ENCODE measurements at regions of chr5 and their contacts with region 1.

Region 1: GRCh38 chr5:5340206-5340729 is 82.2 kb upstream of the ICE1 start:
- DNase-seq: peak; percentile 97
- H3K4me3 Mint-ChIP-seq: peak overlapping the region; percentile 32
- H3K27ac Mint-ChIP-seq: peak overlapping the region; percentile 40
- H3K4me1 Mint-ChIP-seq: peaks cover 50% of the 10 kb centered on the region
- H3K27me3 Mint-ChIP-seq: no peaks in the 10 kb centered on the region
- CTCF ChIP-seq: peak; percentile 59

Region 2: GRCh38 chr5:5116956-5117355 is 223.3 kb before region 1 on chr5:
- CTCF ChIA-PET with region 1: no interaction called
- POLR2A ChIA-PET with region 1: no interaction called
- intact Hi-C with region 1: no loop called
- DNase-seq: no peak
- H3K4me3 Mint-ChIP-seq: no peak overlapping the region
- H3K27ac Mint-ChIP-seq: no peak overlapping the region
- H3K4me1 Mint-ChIP-seq: no peaks in the 10 kb centered on the region
- H3K27me3 Mint-ChIP-seq: peaks cover 46% of the 10 kb centered on the region
- CTCF ChIP-seq: no peak

Region 3: DNA sequence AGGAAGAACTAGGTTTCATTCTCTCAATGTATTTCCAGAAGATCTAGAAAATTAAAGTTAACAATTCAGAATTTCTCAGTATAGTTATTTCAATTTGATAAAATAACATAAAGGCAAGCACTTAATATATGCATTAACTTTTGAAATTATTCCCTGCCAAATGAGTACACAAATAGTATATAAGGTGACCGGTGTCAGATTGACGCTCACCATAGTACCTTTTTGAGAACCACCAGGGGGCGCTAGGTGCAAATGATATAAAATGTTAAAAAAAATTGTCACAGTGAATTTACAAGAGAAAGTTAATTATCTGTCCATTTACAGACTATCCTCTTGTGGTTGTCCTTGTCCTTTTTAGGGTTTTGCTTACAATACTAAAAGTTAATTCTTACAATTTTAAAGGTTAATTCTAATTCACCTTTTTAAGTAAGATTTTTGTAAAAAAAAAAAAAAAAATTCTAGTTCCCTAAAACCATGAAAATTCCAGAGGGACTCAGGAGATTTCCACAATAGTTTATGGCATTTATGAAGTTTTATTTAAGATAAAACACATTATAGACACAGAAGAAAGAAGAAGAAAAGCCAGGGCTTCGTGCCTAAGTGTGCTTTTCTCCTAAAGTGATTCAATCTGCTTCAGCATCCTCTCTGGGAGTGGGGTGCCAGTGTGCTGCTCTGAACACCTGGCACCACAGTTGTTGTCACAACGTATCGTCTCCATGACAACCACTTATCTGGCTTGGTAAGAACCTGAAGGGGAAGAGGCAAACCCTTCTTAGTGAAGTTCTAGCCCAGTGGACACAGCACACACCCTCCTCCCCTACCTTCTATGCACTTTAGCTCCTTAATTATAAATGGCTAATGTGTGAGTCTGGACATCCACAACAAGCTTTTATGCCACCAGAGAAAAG is 198.4 kb before region 1 on chr5:
- CTCF ChIA-PET with region 1: interaction called, 3 read pairs
- POLR2A ChIA-PET with region 1: no interaction called
- intact Hi-C with region 1: loop called (anchors 2 kb)
- DNase-seq: peak; percentile 74
- H3K4me3 Mint-ChIP-seq: no peak overlapping the region
- H3K27ac Mint-ChIP-seq: no peak overlapping the region
- H3K4me1 Mint-ChIP-seq: no peaks in the 10 kb centered on the region
- H3K27me3 Mint-ChIP-seq: peaks cover 16% of the 10 kb centered on the region
- CTCF ChIP-seq: peak; percentile 78

Region 4: DNA sequence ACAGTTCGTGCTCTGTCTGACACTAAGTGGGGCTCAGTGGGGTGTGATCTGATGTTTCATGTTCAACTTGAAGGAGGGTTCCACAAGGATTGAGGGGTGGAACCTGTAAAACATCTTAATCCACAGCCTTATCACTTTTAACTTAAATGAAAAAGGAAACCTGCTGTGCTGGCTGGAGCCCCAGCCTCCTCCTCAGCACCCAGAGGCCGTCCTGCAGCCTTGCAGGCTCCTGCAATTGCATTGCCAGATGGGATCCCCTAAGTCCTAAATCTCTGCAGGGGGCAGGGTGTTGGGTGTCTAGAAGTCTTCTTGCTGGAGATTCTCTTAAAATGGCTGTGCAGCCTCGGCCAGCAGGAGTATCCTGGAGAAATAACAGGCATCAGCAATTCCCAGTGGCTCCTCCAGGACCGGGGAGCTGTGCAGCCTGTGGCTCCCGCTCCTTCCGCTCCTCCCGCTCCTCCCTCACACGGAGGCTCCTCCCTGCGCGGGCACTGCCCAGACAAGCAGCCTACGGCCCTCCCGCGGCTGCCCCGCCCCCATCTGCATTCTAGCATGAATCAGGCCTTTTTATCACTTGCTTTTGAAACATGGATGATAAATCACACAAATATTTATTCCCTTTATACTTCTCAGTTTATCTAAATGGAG is 69.2 kb before region 1 on chr5:
- CTCF ChIA-PET with region 1: no interaction called
- POLR2A ChIA-PET with region 1: no interaction called
- intact Hi-C with region 1: loop called (anchors 5 kb)
- DNase-seq: peak; percentile 88
- H3K4me3 Mint-ChIP-seq: peak overlapping the region; percentile 36
- H3K27ac Mint-ChIP-seq: no peak overlapping the region
- H3K4me1 Mint-ChIP-seq: peaks cover 10% of the 10 kb centered on the region
- H3K27me3 Mint-ChIP-seq: no peaks in the 10 kb centered on the region
- CTCF ChIP-seq: no peak

Region 5: GRCh38 chr5:5738797-5739489 is 398.7 kb after region 1 on chr5:
- CTCF ChIA-PET with region 1: no interaction called
- POLR2A ChIA-PET with region 1: no interaction called
- intact Hi-C with region 1: no loop called
- DNase-seq: no peak
- H3K4me3 Mint-ChIP-seq: no peak overlapping the region
- H3K27ac Mint-ChIP-seq: no peak overlapping the region
- H3K4me1 Mint-ChIP-seq: no peaks in the 10 kb centered on the region
- H3K27me3 Mint-ChIP-seq: no peaks in the 10 kb centered on the region
- CTCF ChIP-seq: no peak